ENCODE measurements at regions of chr12 and their contacts with region 1.

Region 1: DNA sequence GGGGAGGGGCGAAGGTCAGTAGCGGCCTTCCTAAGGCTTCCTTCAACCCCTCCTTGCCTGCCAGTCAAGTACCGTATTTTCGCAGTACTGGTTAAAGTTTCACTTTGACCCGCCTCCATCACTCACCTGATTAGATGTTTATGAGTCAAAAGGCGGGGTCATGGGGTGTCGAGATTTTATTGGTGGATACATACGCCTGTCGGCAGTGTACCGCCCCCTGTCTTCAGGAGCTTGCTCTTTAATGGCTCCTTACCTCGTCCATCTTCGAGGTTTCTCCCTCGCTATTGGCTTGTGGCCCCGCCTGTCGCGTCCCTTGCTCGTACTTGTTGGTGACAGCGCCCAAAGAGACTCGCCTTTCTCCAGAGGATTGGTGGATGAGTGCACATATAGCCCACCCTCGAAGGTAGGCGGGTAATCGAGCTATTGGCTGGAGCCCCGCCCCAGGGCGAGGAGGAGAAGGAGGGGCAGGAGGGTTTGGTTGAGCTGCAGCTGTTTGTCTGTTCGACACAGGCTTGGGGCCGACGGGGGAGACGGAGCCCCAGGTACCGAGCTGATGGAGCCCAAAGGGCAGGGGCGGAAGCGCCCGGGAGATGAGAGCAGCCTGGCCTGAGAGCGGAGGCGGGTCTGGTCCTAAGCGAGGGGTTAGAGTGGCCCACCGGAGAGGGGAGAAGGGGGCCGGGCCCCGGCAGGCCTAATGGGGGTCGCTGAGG is at the start of gene RAB5B:
- DNase-seq: peak; percentile 100
- ATAC-seq: peak; percentile 91
- H3K4me3 ChIP-seq: peak within 1 kb of the TSS; percentile 88
- H3K27ac ChIP-seq: peak within 1 kb of the TSS; percentile 85
- H3K4me1 ChIP-seq: peaks cover 2% of the 10 kb centered on the region; the same call in 1 of the 2 replicates
- H3K27me3 ChIP-seq: no peaks in the 10 kb centered on the region
- CTCF ChIP-seq: no peak
- EP300 ChIP-seq: no peak
- POLR2A ChIP-seq: peak; percentile 97
- RAD21 ChIP-seq: no peak
- polyA plus RNA-seq, gene RAB5B: 7.5 to 11.3 TPM

Region 2: GRCh38 chr12:55728939-55729823 is 244.6 kb before region 1 on chr12 and contains the start of gene CD63:
- CTCF ChIA-PET with region 1: interaction called, 3 read pairs
- POLR2A ChIA-PET with region 1: interaction called, 15 read pairs
- RAD21 ChIA-PET with region 1: interaction called, 4 read pairs
- SMC1A ChIA-PET with region 1: interaction called, 3 read pairs
- in situ Hi-C with region 1: no loop called
- intact Hi-C with region 1: no loop called
- DNase-seq: no peak
- ATAC-seq: peak; percentile 79
- H3K4me3 ChIP-seq: peak within 1 kb of the TSS; percentile 76
- H3K27ac ChIP-seq: peak within 1 kb of the TSS; percentile 68
- H3K4me1 ChIP-seq: peaks cover 11% of the 10 kb centered on the region
- H3K27me3 ChIP-seq: no peaks in the 10 kb centered on the region
- CTCF ChIP-seq: no peak; a peak in 1 of 6 replicates
- EP300 ChIP-seq: peak in 1 of 2 experiments; percentile 46; a peak in 1 of 4 replicates
- POLR2A ChIP-seq: peak; percentile 77
- RAD21 ChIP-seq: no peak
- polyA plus RNA-seq, gene CD63: 194 to 220 TPM

Region 3: DNA sequence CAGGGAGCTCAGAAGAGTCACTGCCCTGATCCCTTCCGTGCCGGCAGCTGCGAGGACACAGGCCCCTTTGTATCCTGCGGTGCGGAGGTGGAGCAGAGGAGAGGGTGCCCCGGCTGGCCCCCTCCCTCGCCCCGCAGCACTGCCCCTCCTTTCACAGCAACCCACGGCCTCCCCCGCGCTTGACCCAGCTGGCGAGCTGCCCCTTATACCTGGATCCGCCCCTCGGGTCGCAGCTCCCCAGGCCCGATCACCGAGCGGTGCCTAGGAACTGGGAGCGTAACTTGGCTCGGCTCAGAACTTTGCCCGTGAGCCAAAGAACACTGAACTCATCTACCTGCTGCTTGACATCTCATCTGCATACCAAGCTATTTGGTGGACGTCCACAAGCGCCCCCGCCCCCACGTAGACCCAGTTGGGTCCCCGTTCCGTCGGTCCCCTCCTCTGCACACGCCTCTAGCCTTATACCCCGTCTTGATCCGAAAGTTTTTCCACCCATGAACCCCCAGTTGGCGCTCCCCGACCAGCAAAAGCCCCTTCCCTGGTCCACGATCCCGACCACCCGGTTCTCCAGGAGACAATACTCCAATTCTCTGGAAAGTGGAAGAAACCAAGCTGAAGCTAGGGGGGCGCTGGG is 143.7 kb before region 1 on chr12:
- CTCF ChIA-PET with region 1: interaction called, 3 read pairs
- POLR2A ChIA-PET with region 1: interaction called, 19 read pairs
- RAD21 ChIA-PET with region 1: interaction called, 5 read pairs
- SMC1A ChIA-PET with region 1: interaction called, 4 read pairs
- in situ Hi-C with region 1: no loop called
- intact Hi-C with region 1: loop called (anchors 1 kb)
- DNase-seq: no peak
- ATAC-seq: peak; percentile 25
- H3K4me3 ChIP-seq: peak overlapping the region; percentile 96
- H3K27ac ChIP-seq: peak overlapping the region; percentile 76
- H3K4me1 ChIP-seq: peaks cover 21% of the 10 kb centered on the region; the same call in 1 of the 2 replicates
- H3K27me3 ChIP-seq: no peaks in the 10 kb centered on the region
- CTCF ChIP-seq: no peak
- EP300 ChIP-seq: no peak
- POLR2A ChIP-seq: 0 out of 2 replicates have a peak, but pooled peaks have one; percentile 20
- RAD21 ChIP-seq: 0 out of 2 replicates have a peak, but pooled peaks have one; percentile 13

Region 4: DNA sequence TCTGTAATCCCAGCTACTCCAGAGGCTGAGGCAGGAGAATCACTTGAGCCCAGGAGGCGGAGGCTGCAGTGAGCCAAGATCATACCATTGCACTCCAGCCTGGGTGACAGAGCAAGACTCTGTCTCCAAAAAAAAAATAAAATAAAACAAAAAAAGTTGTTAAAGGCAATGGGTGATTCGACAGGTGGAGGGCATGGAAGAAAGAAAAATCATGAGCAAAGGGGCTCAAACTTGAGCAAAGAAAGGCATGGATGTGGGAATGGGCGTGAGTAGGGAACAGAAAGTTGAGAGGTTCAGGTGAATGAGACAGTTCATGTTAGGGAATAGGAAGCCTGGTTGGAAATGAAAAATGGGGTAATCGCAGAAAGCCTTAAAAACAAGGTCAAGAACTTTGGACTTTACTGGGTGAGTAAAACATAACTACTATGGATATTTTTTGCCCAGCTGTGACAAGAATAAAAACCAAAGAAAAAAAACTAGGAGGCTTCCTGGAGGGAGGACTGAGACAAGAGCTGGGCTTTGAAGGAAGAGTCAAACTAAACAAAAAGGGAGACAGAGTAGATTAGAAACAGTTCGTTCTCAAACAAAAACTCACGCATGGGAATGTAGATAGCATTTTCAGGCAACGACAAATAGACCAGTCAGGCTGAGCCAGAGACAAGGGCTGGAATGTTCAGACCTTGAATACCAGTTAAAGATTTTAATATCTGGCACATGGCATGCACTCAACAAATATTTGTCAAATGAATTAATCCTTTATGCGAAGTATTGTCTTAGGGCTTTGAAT is 64.8 kb before region 1 on chr12:
- CTCF ChIA-PET with region 1: no interaction called
- POLR2A ChIA-PET with region 1: no interaction called
- RAD21 ChIA-PET with region 1: no interaction called
- SMC1A ChIA-PET with region 1: no interaction called
- in situ Hi-C with region 1: no loop called
- intact Hi-C with region 1: no loop called
- DNase-seq: no peak
- ATAC-seq: no peak
- H3K4me3 ChIP-seq: no peak overlapping the region
- H3K27ac ChIP-seq: no peak overlapping the region
- H3K4me1 ChIP-seq: no peaks in the 10 kb centered on the region
- H3K27me3 ChIP-seq: no peaks in the 10 kb centered on the region
- CTCF ChIP-seq: no peak
- EP300 ChIP-seq: no peak
- POLR2A ChIP-seq: no peak
- RAD21 ChIP-seq: no peak

Region 5: DNA sequence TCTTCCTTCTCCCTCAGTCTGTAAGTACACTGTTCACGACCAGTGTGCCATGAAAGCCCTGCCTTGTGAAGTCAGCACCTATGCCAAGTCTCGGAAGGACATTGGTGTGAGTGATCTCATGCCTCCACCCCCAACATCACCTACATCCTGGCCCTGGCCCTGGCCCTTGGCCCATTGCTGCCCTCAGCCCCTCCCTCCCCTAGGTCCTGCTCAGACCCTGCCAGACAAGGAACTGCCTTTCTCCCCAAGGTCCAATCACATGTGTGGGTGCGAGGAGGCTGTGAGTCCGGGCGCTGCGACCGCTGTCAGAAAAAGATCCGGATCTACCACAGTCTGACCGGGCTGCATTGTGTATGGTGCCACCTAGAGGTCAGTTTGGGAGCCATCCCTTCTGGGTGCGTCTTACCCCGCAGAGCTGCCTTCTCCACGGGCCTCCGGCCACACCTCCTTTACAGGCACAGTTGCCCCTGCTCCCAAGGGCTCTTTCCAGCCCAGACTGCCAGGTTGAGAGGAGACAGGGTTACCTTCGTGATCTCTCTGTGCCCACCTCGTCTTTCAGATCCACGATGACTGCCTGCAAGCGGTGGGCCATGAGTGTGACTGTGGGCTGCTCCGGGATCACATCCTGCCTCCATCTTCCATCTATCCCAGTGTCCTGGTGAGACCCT is 33.6 kb before region 1 on chr12:
- CTCF ChIA-PET with region 1: interaction called, 22 read pairs
- POLR2A ChIA-PET with region 1: interaction called, 6 read pairs
- RAD21 ChIA-PET with region 1: interaction called, 4 read pairs
- SMC1A ChIA-PET with region 1: interaction called, 4 read pairs
- in situ Hi-C with region 1: no loop called
- intact Hi-C with region 1: no loop called
- DNase-seq: peak; percentile 60
- ATAC-seq: peak; percentile 100
- H3K4me3 ChIP-seq: no peak overlapping the region
- H3K27ac ChIP-seq: no peak overlapping the region
- H3K4me1 ChIP-seq: peaks cover 10% of the 10 kb centered on the region
- H3K27me3 ChIP-seq: no peaks in the 10 kb centered on the region
- CTCF ChIP-seq: peak; percentile 91 to 95 (median 94); a peak in 5 of 6 replicates
- EP300 ChIP-seq: no peak
- POLR2A ChIP-seq: no peak
- RAD21 ChIP-seq: peak; percentile 82

Region 6: DNA sequence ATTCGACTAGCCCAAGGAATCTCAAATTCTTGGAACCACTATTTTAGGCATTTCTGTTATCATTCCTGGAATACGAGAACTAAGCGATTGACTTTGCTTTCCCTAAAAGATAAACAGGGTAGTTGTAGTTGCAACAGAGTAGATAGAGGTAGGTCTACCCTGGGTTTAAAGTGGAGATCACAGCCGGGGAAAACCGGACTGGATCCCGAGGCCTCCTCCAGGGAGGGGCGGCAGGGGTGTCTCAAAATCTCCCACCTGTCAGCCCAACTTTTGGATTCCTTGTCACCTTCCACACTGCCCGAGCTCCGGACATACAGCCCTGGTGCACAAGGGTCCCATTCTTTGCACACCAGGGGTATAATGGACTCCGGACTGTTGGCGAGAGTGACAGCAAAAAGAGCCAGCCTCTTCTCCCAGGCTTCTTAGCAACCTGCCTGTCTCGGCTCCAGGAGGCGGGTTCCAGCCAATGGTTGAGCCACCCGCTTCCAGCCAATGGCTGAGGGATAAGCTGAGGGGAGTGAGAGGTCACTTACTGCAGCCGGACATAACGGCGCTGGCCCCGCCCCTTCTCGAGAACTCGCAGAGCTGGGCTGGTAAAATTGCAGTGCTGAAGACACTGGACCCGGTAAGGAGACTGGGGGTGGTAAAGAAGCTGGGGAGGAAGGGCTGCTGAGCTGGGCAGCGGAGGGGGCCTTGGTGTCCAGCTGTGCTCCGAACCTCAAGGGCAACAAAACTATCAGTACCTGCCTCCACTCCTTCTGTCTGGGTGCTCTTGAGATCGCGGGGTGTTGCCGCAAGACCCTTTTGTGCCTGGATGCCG is 23.2 kb after region 1 on chr12 and contains the start of gene SUOX:
- CTCF ChIA-PET with region 1: interaction called, 55 read pairs
- POLR2A ChIA-PET with region 1: interaction called, 46 read pairs
- RAD21 ChIA-PET with region 1: interaction called, 30 read pairs
- SMC1A ChIA-PET with region 1: interaction called, 20 read pairs
- in situ Hi-C with region 1: no loop called
- intact Hi-C with region 1: no loop called
- DNase-seq: peak; percentile 83
- ATAC-seq: peak; percentile 100
- H3K4me3 ChIP-seq: peak within 1 kb of the TSS; percentile 74
- H3K27ac ChIP-seq: peak within 1 kb of the TSS; percentile 33; the same call in 1 of the 2 replicates
- H3K4me1 ChIP-seq: peaks cover 3% of the 10 kb centered on the region; the same call in 1 of the 2 replicates
- H3K27me3 ChIP-seq: no peaks in the 10 kb centered on the region
- CTCF ChIP-seq: no peak
- EP300 ChIP-seq: no peak
- POLR2A ChIP-seq: peak; percentile 72
- RAD21 ChIP-seq: no peak
- polyA plus RNA-seq, gene SUOX: 5.1 to 5.2 TPM

Region 7: DNA sequence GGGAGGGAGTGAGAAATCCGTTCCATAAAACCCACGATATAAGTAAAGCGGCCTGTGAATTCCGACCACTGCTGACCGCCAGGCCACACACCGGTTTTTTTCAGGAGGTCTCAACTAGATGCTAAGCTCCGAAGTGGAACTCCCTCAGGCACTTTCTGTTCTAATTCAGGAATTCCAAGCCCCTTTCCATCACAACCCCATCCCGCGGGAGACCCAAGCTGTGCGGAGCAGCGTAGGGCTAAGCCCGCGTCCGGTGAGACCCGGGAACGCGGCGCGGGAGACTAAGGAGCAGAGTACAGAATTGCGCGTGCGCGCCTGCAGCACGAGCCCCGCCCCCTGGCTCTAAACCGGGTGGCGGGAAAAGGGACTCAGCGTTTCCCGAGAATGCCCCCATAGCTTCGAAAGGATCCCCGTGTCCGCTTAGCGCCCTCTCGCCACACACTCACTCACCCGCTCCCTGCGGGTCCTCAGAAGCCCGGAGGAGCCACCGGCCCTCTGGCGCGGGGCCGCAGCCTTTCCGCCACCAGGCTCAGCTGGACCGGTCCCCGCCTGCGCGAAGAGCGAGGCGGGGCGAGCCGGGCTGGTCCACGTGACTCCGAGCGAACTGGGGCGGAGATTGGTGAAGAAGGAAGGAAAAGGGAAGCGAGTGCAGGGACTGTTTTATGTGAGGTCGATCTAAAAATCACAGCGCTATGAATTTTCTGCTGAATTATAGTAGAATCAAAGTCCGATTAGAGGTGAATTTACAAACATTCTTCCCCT is 475.3 kb after region 1 on chr12 and contains the start of gene TIMELESS:
- CTCF ChIA-PET with region 1: no interaction called
- POLR2A ChIA-PET with region 1: no interaction called
- RAD21 ChIA-PET with region 1: no interaction called
- SMC1A ChIA-PET with region 1: no interaction called
- in situ Hi-C with region 1: no loop called
- intact Hi-C with region 1: loop called (anchors 5 kb)
- DNase-seq: peak; percentile 77
- ATAC-seq: peak; percentile 98
- H3K4me3 ChIP-seq: peak within 1 kb of the TSS; percentile 91
- H3K27ac ChIP-seq: peak within 1 kb of the TSS; percentile 75
- H3K4me1 ChIP-seq: no peaks in the 10 kb centered on the region
- H3K27me3 ChIP-seq: no peaks in the 10 kb centered on the region
- CTCF ChIP-seq: no peak
- EP300 ChIP-seq: no peak
- POLR2A ChIP-seq: peak; percentile 91
- RAD21 ChIP-seq: no peak
- polyA plus RNA-seq, gene TIMELESS: 10.4 to 20.5 TPM